CD4-positive, alpha-beta memory T cell (primary cell): ENCODE measurements at regions of chr1 and their contacts with region 1.

Region 1: GRCh38 chr1:110034451-110035235 is at the start of gene STRIP1:
- DNase-seq: peak; percentile 93 to 95 (median 95)
- H3K4me3 ChIP-seq: peak within 1 kb of the TSS; percentile 74 to 80
- H3K4me3 Mint-ChIP-seq: peak within 1 kb of the TSS; percentile 93 to 98 (median 97)
- H3K27ac ChIP-seq: peak within 1 kb of the TSS; percentile 97
- H3K27ac Mint-ChIP-seq: peak within 1 kb of the TSS; percentile 83 to 98 (median 95)
- H3K4me1 ChIP-seq: peaks cover 44% of the 10 kb centered on the region
- H3K4me1 Mint-ChIP-seq: peaks cover 34 to 66% (median 48%) of the 10 kb centered on the region in 4 donors
- H3K27me3 ChIP-seq: no peaks in the 10 kb centered on the region
- H3K27me3 Mint-ChIP-seq: no peaks in the 10 kb centered on the region
- total RNA-seq, gene STRIP1: 73.3 TPM

Region 2: GRCh38 chr1:109483672-109484518 is 550.7 kb before region 1 on chr1 and contains the start of gene ATXN7L2:
- CTCF ChIA-PET with region 1: interaction called, 3 read pairs
- POLR2A ChIA-PET with region 1: interaction called, 5 read pairs
- intact Hi-C with region 1: loop called (anchors 5 kb)
- DNase-seq: peak; percentile 92 to 95 (median 93)
- H3K4me3 ChIP-seq: peak within 1 kb of the TSS; percentile 95 to 98
- H3K4me3 Mint-ChIP-seq: peak within 1 kb of the TSS; percentile 91 to 96 (median 94)
- H3K27ac ChIP-seq: peak within 1 kb of the TSS; percentile 76
- H3K27ac Mint-ChIP-seq: peak within 1 kb of the TSS; percentile 86 to 97 (median 92)
- H3K4me1 ChIP-seq: peaks cover 20% of the 10 kb centered on the region
- H3K4me1 Mint-ChIP-seq: peaks cover 17 to 42% (median 30%) of the 10 kb centered on the region in 4 donors
- H3K27me3 ChIP-seq: peaks cover 4% of the 10 kb centered on the region
- H3K27me3 Mint-ChIP-seq: peaks cover 0 to 5% of the 10 kb centered on the region in 2 donors
- total RNA-seq, gene ATXN7L2: 7.4 to 9.0 TPM

Region 3: DNA sequence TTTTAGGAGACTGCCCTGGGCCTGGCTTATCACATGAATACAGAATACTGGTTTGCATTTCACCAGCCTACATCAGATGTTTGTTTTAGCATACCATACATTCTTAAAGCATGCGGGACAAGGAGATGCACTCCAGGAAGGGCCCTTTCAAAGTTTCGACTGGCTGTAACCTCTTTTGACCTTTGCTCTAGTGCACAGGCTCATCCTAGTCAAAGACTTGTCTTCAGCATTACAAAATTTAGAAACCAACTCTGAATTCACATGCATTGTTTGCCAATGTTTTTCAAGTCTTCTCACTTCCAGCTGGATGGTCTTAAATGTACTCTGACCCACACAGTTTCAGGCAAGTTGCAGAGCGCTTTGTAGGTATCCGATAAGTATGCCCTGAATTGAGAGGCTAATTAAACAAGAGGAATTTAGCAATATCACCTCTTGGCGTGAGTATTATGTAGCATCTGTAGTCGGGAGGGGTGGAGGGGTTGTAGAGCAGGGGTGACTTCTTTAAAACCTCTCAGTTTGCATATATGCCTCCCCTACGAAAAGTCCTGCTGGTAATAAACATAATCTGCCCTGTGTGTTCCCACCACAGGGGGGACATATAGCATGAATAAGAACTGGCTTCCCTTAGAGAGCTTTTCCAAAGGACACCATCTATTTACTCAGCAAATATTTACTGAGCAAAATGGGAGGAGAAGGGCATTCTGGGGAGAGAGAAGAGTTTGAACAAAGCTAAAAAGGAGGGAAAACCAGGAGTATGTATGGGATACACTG is 74.5 kb before region 1 on chr1:
- CTCF ChIA-PET with region 1: no interaction called
- POLR2A ChIA-PET with region 1: no interaction called
- intact Hi-C with region 1: no loop called
- DNase-seq: no peak
- H3K4me3 ChIP-seq: no peak overlapping the region
- H3K4me3 Mint-ChIP-seq: no peak overlapping the region
- H3K27ac ChIP-seq: no peak overlapping the region
- H3K27ac Mint-ChIP-seq: no peak overlapping the region
- H3K4me1 ChIP-seq: no peaks in the 10 kb centered on the region
- H3K4me1 Mint-ChIP-seq: peaks cover 0 to 3% (median 0%) of the 10 kb centered on the region in 4 donors
- H3K27me3 ChIP-seq: no peaks in the 10 kb centered on the region
- H3K27me3 Mint-ChIP-seq: peaks cover under 1 to 10% of the 10 kb centered on the region in 2 donors

Region 4: GRCh38 chr1:110011527-110012041 is 23.1 kb before region 1 on chr1:
- CTCF ChIA-PET with region 1: interaction called, 21 read pairs
- POLR2A ChIA-PET with region 1: interaction called, 3 read pairs
- intact Hi-C with region 1: no loop called
- DNase-seq: peak in 4 of 5 donors; percentile 26 to 44 (median 40)
- H3K4me3 ChIP-seq: no peak overlapping the region
- H3K4me3 Mint-ChIP-seq: no peak overlapping the region
- H3K27ac ChIP-seq: no peak overlapping the region
- H3K27ac Mint-ChIP-seq: peak overlapping the region in 5 of 7 donors; percentile 19 to 91 (median 36)
- H3K4me1 ChIP-seq: no peaks in the 10 kb centered on the region
- H3K4me1 Mint-ChIP-seq: peaks cover 0 to 5% (median 4%) of the 10 kb centered on the region in 4 donors
- H3K27me3 ChIP-seq: no peaks in the 10 kb centered on the region
- H3K27me3 Mint-ChIP-seq: no peaks in the 10 kb centered on the region

Region 5: GRCh38 chr1:110060034-110060661 is 25.5 kb after region 1 on chr1:
- CTCF ChIA-PET with region 1: interaction called, 120 read pairs
- POLR2A ChIA-PET with region 1: interaction called, 5 read pairs
- intact Hi-C with region 1: loop called (anchors 1 kb)
- DNase-seq: peak; percentile 53 to 68 (median 56)
- H3K4me3 ChIP-seq: no peak overlapping the region
- H3K4me3 Mint-ChIP-seq: no peak overlapping the region
- H3K27ac ChIP-seq: no peak overlapping the region
- H3K27ac Mint-ChIP-seq: peak overlapping the region in 2 of 7 donors; percentile 16 to 34
- H3K4me1 ChIP-seq: no peaks in the 10 kb centered on the region
- H3K4me1 Mint-ChIP-seq: peaks cover 0 to 5% (median 3%) of the 10 kb centered on the region in 4 donors
- H3K27me3 ChIP-seq: no peaks in the 10 kb centered on the region
- H3K27me3 Mint-ChIP-seq: no peaks in the 10 kb centered on the region

Region 6: DNA sequence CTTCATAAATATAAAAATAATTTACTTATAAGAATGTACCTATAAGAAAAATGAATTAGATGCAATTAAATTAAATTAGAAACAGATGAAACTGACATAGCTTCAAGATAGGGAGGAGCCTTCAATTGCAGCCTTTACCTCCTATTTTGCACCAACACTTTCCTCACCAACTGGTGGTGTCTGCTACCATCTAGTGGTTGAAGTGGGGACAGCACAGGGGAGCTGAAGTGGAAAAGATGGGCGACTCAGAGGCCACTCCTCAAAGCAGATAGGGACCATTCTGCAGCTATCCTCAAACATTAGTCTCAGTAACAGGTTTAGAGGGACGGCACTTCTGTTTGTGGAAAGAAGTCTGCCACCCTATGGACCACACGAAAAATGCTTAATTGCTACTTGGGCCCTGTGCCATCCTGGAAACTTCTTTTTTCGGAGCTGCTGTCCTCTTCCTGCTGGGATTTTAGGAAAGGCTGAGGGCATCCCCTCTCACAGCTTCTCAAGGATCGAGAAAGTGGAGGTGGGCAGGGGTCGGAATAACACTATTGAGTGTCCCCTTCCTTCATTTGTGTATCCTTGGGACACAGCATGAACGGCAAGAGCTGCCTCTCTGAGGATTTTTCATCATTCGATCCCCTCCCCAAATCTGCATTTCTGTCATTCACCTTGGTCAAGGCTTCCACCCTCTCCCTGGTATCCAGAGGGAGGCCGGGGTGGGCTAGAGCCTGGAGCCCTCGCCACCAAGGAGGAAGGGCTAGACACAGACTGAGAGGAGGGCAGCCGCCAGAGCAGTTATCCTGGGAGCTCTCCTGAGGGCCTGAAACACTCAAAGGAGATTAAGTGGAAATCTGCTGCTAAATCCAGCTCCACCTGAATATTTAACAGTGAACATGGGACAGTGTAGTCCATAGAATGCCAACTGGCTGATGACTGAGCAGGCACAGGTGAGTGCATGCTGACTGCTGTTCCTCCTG is 425.9 kb after region 1 on chr1:
- CTCF ChIA-PET with region 1: interaction called, 23 read pairs
- POLR2A ChIA-PET with region 1: no interaction called
- intact Hi-C with region 1: no loop called
- DNase-seq: peak; percentile 78 to 84 (median 83)
- H3K4me3 ChIP-seq: no peak overlapping the region
- H3K4me3 Mint-ChIP-seq: no peak overlapping the region
- H3K27ac ChIP-seq: no peak overlapping the region
- H3K27ac Mint-ChIP-seq: no peak overlapping the region
- H3K4me1 ChIP-seq: no peaks in the 10 kb centered on the region
- H3K4me1 Mint-ChIP-seq: no peaks in the 10 kb centered on the region
- H3K27me3 ChIP-seq: no peaks in the 10 kb centered on the region
- H3K27me3 Mint-ChIP-seq: peaks cover 0 to 2% of the 10 kb centered on the region in 2 donors

Region 7: GRCh38 chr1:110963691-110964399 is 929.2 kb after region 1 on chr1 and contains the start of gene LRIF1:
- CTCF ChIA-PET with region 1: no interaction called
- POLR2A ChIA-PET with region 1: interaction called, 3 read pairs
- intact Hi-C with region 1: loop called (anchors 5 kb)
- DNase-seq: peak; percentile 98 to 100 (median 100)
- H3K4me3 ChIP-seq: peak within 1 kb of the TSS; percentile 90 to 95
- H3K4me3 Mint-ChIP-seq: peak within 1 kb of the TSS; percentile 81 to 96 (median 92)
- H3K27ac ChIP-seq: peak within 1 kb of the TSS; percentile 96
- H3K27ac Mint-ChIP-seq: peak within 1 kb of the TSS; percentile 93 to 100 (median 98)
- H3K4me1 ChIP-seq: peaks cover 31% of the 10 kb centered on the region
- H3K4me1 Mint-ChIP-seq: peaks cover 20 to 35% (median 27%) of the 10 kb centered on the region in 4 donors
- H3K27me3 ChIP-seq: peaks cover 3% of the 10 kb centered on the region
- H3K27me3 Mint-ChIP-seq: peaks cover 8 to 10% of the 10 kb centered on the region in 2 donors
- total RNA-seq, gene LRIF1: 27.0 to 28.2 TPM